Activated CD4-positive, alpha-beta memory T cell treated with anti-CD3 and anti-CD28 coated beads for 36 hours (primary cell): ENCODE measurements at regions of chr20 and their contacts with region 1.

Region 1: GRCh38 chr20:3820048-3820900 is at the start of gene AP5S1:
- DNase-seq: peak; percentile 96
- H3K4me3 Mint-ChIP-seq: peak within 1 kb of the TSS; percentile 81
- H3K27ac Mint-ChIP-seq: peak within 1 kb of the TSS; percentile 93
- H3K4me1 Mint-ChIP-seq: peaks cover 36% of the 10 kb centered on the region
- H3K27me3 Mint-ChIP-seq: no peaks in the 10 kb centered on the region
- total RNA-seq, gene AP5S1: 9.1 to 10.0 TPM

Region 2: GRCh38 chr20:3753098-3753980 is 66.9 kb before region 1 on chr20:
- CTCF ChIA-PET with region 1: interaction called, 10 read pairs
- POLR2A ChIA-PET with region 1: no interaction called
- intact Hi-C with region 1: no loop called
- DNase-seq: peak; percentile 75
- H3K4me3 Mint-ChIP-seq: no peak overlapping the region
- H3K27ac Mint-ChIP-seq: peak overlapping the region; percentile 58
- H3K4me1 Mint-ChIP-seq: peaks cover 6% of the 10 kb centered on the region
- H3K27me3 Mint-ChIP-seq: no peaks in the 10 kb centered on the region

Region 3: DNA sequence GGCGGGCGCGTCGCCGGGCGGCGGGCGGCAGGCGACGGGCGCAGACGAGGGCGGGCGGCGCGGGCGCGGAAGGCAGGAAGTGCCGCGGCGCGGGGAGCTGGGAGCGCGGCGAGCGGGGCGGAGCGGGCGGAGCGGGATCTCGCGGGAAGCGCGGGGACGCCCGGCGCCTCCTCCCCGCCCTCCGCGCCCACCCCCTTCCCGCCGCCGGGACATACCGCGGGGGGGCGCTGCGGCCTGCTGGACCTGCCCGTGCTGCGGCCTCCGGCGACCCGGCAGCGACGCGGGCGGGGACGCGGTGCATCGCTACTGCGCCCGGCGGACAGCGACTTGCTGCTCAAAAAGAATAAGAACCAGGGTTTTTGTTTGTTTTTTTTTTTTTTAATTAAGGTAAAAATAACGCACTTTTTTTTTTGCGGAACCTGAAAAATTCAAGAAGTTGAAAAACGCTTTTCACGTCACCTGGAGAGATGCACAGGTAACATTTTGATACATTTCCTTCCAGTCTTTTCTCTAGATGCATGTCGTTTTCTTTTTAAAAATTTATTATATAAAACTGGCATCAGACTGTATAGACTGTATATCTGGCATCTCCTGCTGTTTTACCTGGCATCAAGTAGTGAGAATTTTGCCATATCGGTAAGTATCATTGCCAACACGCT is 33.5 kb before region 1 on chr20 and contains the start of gene CENPB:
- CTCF ChIA-PET with region 1: interaction called, 180 read pairs
- POLR2A ChIA-PET with region 1: interaction called, 27 read pairs
- intact Hi-C with region 1: loop called (anchors 1 kb)
- DNase-seq: peak; percentile 93
- H3K4me3 Mint-ChIP-seq: peak within 1 kb of the TSS; percentile 83
- H3K27ac Mint-ChIP-seq: peak within 1 kb of the TSS; percentile 79
- H3K4me1 Mint-ChIP-seq: peaks cover 38% of the 10 kb centered on the region
- H3K27me3 Mint-ChIP-seq: no peaks in the 10 kb centered on the region
- total RNA-seq, gene CENPB: 50.1 to 51.9 TPM

Region 4: DNA sequence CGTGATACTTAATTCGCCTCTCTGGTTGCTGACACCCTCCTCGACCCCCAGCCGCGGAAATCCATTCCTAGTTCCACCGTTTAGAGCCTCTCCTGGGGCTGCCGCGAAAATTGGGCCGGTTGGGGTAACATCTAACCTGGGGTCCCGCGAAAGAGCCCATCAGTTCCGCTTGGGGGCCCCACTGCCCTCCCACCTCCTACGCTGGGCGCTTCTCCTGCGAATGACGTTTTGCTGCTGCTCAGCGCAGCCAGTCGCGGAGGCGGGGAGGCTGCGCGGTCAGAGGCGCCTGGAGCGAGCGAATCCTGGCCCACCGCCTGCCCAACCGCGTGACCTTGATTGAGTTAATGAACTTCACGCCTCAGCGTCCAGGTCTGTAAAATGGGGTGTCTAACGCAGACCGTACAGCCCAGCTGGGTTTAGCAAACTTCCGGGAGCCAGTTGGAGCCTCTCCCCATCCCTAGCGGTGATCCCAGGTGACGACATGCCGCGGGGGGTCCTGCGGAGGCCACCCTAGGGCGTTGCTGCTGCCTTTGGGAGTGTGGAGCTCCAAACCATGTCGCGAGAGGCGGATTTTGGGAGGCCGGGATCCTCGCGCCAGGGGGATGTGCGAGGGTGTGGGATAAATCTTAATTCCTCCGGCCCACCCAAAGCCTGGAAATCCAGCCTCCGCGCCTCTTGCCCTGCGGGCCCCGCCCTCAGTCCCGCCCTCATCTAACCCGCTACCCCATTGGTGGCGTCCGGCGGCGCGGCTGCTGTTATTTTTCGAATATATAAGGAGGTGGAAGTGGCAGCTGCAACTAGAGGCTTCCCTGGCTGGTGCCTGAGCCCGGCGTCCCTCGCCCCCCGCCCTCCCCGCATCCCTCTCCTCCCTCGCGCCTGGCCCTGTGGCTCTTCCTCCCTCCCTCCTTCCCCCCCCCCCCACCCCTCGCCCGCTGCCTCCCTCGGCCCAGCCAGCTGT is 24.5 kb before region 1 on chr20 and contains the start of gene CDC25B:
- CTCF ChIA-PET with region 1: interaction called, 180 read pairs
- POLR2A ChIA-PET with region 1: interaction called, 12 read pairs
- intact Hi-C with region 1: loop called (anchors 1 kb)
- DNase-seq: peak; percentile 95
- H3K4me3 Mint-ChIP-seq: peak within 1 kb of the TSS; percentile 95
- H3K27ac Mint-ChIP-seq: peak within 1 kb of the TSS; percentile 98
- H3K4me1 Mint-ChIP-seq: peaks cover 36% of the 10 kb centered on the region
- H3K27me3 Mint-ChIP-seq: no peaks in the 10 kb centered on the region
- total RNA-seq, gene CDC25B: 120 to 128 TPM

Region 5: DNA sequence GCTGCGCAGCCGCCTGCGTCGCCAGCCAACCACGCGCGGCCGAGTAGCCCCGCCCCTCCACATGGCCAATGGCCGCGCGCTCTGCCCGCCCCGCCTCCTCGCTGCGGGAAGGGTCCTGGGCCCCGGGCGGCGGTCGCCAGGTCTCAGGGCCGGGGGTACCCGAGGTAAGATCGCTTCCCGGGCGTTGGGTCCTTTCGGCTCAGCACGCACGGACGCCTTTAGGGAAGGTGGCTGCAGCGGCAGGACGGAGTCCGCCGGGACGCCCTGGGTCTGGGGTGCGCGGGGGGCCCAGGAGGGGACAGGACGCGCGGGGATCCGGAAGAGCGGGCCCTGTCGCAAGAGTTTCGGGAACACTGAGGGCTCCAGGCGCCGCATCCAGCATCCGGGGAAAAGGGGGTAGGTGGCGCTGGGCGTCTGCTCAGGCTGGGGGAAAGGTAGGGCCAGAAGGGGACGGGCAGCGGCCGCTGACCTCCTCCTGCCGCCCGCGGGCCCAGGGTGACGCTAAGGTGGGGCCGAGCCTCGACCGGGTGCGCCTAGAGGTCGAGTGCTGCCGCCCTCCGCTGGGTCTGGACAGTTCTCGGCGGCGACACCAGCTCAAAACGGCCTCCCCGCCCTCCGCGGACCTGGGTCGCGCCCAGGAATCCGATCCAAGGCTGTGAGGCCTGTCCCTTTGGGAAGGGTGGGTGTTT is 26.6 kb after region 1 on chr20 and contains the start of gene MAVS:
- CTCF ChIA-PET with region 1: interaction called, 8 read pairs
- POLR2A ChIA-PET with region 1: interaction called, 3 read pairs
- intact Hi-C with region 1: loop called (anchors 2 kb)
- DNase-seq: peak; percentile 89
- H3K4me3 Mint-ChIP-seq: peak within 1 kb of the TSS; percentile 91
- H3K27ac Mint-ChIP-seq: peak within 1 kb of the TSS; percentile 85
- H3K4me1 Mint-ChIP-seq: peaks cover 24% of the 10 kb centered on the region
- H3K27me3 Mint-ChIP-seq: no peaks in the 10 kb centered on the region
- total RNA-seq, gene MAVS: 22.2 to 24.2 TPM

Region 6: GRCh38 chr20:3854462-3854871 is 34.2 kb after region 1 on chr20:
- CTCF ChIA-PET with region 1: interaction called, 16 read pairs
- POLR2A ChIA-PET with region 1: no interaction called
- intact Hi-C with region 1: no loop called
- DNase-seq: no peak
- H3K4me3 Mint-ChIP-seq: no peak overlapping the region
- H3K27ac Mint-ChIP-seq: peak overlapping the region; percentile 23
- H3K4me1 Mint-ChIP-seq: peaks cover 2% of the 10 kb centered on the region
- H3K27me3 Mint-ChIP-seq: no peaks in the 10 kb centered on the region

Region 7: GRCh38 chr20:3932681-3933080 is 112.4 kb after region 1 on chr20:
- CTCF ChIA-PET with region 1: no interaction called
- POLR2A ChIA-PET with region 1: no interaction called
- intact Hi-C with region 1: no loop called
- DNase-seq: no peak
- H3K4me3 Mint-ChIP-seq: no peak overlapping the region
- H3K27ac Mint-ChIP-seq: no peak overlapping the region
- H3K4me1 Mint-ChIP-seq: peaks cover 30% of the 10 kb centered on the region
- H3K27me3 Mint-ChIP-seq: no peaks in the 10 kb centered on the region